Left colon (tissue), 2 donors: ENCODE measurements at regions of chr20 and their contacts with region 1.

Region 1: DNA sequence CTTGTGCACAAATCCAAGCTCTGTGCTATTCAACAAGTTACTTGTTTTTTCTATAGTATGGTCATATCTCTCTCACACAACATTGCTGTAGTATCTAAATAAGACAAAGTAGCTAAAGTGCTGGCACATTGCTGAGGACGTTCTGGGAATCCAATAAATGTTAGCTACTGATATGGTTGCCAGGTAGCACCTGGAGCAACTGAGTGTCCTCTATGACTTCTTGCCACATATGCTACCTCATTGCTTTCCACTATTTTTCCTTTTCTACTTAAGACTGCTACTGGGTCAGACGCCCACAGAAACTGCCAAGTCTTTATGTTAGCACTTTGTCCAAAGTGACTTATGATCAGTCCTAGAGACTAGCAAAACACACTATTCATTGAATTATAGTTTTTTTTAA is 85.3 kb downstream of the SYCP2 start:
- DNase-seq: no peak
- ATAC-seq: peak; percentile 60

Region 2: GRCh38 chr20:59782986-59783640 is 65.1 kb before region 1 on chr20:
- intact Hi-C with region 1: loop called in 1 of 2 experiments (anchors 2 kb)
- DNase-seq: peak in 1 of 2 donors; percentile 65
- ATAC-seq: peak; percentile 57